Activated CD4-positive, alpha-beta T cell treated with anti-CD3 and anti-CD28 coated beads for 36 hours (primary cell): ENCODE measurements at regions of chr1 and their contacts with region 1.

Region 1: DNA sequence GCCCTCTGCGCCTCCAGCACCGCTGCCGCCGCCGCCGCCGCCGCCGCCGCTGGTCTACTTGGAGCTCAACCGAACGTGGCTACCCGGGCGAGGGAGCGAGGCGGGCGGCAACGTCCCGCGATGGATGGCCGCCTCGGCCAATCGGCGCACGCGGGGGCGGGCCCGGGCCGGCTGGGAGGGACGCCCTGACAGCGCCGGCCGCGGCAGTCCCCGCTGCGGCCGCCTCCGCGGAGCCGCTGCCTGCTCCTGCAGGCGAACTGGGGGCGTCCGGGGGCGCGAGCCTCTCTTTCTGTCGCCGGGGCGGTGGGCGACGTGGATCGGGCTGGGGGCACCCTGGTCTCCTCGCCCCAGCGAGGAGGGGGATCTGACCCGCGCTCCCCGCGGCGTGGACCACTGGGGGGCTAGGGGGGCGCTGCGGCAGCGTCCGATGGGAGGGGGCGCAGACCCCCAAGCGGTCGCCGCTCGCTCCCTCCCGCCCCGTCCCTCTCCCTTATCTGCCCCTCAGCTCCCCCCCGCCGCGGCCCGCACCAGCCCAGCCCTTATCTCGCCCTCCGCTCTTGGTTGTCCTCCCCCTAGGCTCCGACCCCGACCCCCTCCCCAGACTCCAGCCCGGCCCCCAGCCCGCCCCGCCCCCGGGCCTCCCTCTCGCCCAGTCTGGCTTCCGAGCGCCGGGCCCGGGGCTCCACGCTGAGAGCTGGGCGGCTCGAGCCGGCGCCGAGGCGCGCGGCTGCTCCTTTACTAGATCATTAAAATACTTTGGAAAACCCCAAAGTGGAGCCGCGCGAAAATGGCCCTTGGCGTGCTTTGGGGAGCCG is at the start of gene SSBP3:
- DNase-seq: peak; percentile 95
- ATAC-seq: peak; percentile 84
- H3K4me3 Mint-ChIP-seq: peak within 1 kb of the TSS; percentile 76
- H3K27ac Mint-ChIP-seq: peak within 1 kb of the TSS; percentile 88
- H3K4me1 Mint-ChIP-seq: peaks cover 57% of the 10 kb centered on the region
- H3K27me3 Mint-ChIP-seq: no peaks in the 10 kb centered on the region
- total RNA-seq, gene SSBP3: 40.3 to 64.2 TPM

Region 2: DNA sequence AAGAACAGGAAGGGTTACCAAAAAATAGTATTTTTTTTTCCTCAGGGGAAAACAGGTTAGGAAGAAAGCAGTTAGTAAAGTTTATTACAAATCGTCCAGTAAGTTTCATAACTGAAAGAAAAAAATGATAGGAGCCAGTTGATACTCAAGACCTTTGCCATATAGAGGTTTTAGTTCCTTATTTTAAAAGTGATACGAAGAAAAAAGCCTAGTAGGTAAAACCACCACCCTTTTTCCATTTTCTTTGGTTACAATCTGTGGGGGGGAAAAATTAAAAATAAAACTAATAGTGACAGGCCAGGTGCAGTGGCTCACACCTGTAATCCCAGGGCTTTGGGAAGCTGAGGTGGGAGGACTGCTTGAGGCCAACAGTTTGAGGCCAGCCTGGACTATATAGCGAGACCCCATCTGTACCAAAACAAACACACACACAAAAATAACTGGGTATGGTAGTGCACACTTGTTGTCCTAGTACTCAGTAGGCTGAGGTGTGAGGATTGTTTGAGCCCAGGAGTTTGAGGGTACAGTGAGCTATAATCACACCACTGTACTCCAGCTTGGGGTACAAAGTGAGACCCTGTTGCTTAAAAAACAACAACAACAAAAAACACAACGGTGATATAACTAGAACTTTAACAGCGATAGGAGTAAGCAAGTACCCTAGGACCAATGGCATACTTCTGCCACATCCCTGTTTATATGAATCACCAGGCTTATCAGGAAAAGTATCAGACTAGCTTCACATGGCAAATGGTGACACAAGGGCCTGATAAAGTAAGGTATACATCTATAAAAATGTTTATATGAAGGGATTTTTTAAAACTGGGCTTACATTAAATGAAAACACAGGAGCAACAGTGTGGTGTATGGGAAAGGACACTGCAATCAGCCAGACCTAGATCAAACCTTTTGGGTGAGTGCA is 358.9 kb before region 1 on chr1:
- CTCF ChIA-PET with region 1: no interaction called
- POLR2A ChIA-PET with region 1: interaction called, 18 read pairs
- intact Hi-C with region 1: loop called (anchors 2 kb)
- DNase-seq: no peak
- ATAC-seq: no peak
- H3K4me3 Mint-ChIP-seq: no peak overlapping the region
- H3K27ac Mint-ChIP-seq: peak overlapping the region; percentile 76
- H3K4me1 Mint-ChIP-seq: peaks cover 38% of the 10 kb centered on the region
- H3K27me3 Mint-ChIP-seq: no peaks in the 10 kb centered on the region

Region 3: DNA sequence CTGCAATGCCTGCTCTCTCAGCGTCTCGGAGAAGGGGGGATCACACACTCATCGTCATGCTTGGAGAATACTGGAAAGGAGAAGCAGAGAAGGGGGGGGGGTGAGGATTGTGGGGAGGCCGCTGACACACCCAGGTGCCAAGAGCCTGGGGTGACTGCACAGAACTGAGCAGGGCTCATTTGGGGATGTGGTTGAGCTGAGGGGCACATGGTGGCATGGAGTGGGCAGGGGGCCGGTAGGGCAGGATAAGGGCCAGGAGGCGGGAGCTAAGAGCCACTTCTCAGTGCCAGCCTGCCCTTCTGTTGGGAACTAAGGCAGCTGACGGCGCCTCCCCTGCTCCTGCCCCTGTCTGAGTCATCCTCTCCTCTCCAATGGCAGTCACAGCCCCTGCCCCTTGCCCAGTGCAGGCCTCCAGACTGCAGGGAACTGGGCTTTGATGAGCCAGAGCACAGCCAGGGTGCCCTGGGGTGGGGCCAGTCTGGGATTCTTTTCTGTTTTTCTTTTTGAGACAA is 179.4 kb before region 1 on chr1:
- CTCF ChIA-PET with region 1: no interaction called
- POLR2A ChIA-PET with region 1: no interaction called
- intact Hi-C with region 1: loop called (anchors 2 to 5 kb)
- DNase-seq: peak; percentile 29
- ATAC-seq: no peak
- H3K4me3 Mint-ChIP-seq: no peak overlapping the region
- H3K27ac Mint-ChIP-seq: no peak overlapping the region
- H3K4me1 Mint-ChIP-seq: peaks cover 24% of the 10 kb centered on the region
- H3K27me3 Mint-ChIP-seq: no peaks in the 10 kb centered on the region

Region 4: GRCh38 chr1:54355931-54356679 is 50.4 kb before region 1 on chr1:
- CTCF ChIA-PET with region 1: interaction called, 4 read pairs
- POLR2A ChIA-PET with region 1: no interaction called
- intact Hi-C with region 1: loop called in 1 of 2 experiments (anchors 5 kb)
- DNase-seq: peak; percentile 33
- ATAC-seq: no peak
- H3K4me3 Mint-ChIP-seq: peak overlapping the region; percentile 77
- H3K27ac Mint-ChIP-seq: peak overlapping the region; percentile 95
- H3K4me1 Mint-ChIP-seq: peaks cover 89% of the 10 kb centered on the region
- H3K27me3 Mint-ChIP-seq: no peaks in the 10 kb centered on the region

Region 5: DNA sequence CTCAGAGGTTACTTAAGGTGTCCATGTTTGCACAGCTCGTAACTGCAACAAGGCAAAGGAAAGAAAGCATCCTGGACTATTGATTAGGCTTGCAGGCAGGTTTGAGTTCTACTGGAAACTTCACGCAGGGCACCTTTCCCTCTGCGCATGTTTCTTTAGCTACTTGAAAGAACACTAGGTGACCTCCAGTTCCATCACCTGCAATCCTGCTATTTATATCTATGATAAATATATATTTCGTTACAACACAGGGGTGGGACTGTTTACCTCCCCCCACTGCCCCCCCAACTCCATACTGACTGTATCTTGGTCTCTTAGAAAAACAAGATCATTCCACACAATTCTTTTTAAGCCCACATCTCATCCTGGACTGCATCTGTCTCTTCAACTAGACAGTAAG is 12.4 kb before region 1 on chr1:
- CTCF ChIA-PET with region 1: interaction called, 4 read pairs
- POLR2A ChIA-PET with region 1: interaction called, 15 read pairs
- intact Hi-C with region 1: no loop called
- DNase-seq: no peak
- ATAC-seq: no peak
- H3K4me3 Mint-ChIP-seq: no peak overlapping the region
- H3K27ac Mint-ChIP-seq: no peak overlapping the region
- H3K4me1 Mint-ChIP-seq: peaks cover 19% of the 10 kb centered on the region
- H3K27me3 Mint-ChIP-seq: no peaks in the 10 kb centered on the region